ENCODE measurements at regions of chr9 and their contacts with region 1.

Region 1: DNA sequence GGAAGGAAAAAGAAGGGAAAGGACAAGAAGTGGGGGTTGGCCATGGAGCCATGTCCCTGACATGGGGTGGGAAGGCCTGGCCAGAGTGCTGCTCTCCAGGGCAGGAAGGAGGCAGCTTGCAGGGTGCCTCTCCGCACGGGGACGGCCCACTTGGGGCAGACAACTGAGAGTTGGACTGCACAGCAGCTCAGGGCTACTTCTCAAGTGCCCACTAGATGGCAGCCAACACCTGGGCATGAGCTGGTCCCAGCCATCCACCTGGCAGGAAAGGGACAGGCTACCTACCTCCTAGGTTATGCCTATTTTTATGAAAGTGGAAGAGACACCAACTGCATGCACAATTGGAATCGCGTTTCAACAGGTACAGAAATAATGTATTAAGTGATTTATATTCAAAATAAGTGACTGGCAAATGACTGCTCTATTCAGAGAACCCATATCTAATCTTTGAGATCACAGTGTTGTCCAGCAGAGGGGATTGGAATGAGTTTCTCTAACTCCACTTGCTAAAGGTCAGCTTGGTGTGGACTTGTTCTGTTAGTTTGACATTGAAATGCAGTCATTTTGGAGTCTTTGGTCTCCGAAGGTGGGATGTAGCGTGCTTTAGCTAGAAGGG is 113.4 kb downstream of the SYK start:
- DNase-seq: peak; percentile 62 to 64
- H3K4me3 ChIP-seq: no peak overlapping the region
- H3K4me3 Mint-ChIP-seq: no peak overlapping the region
- H3K27ac Mint-ChIP-seq: no peak overlapping the region
- H3K4me1 ChIP-seq: no peaks in the 10 kb centered on the region; the same call in 1 of the 2 replicates
- H3K4me1 Mint-ChIP-seq: no peaks in the 10 kb centered on the region
- H3K27me3 ChIP-seq: no peaks in the 10 kb centered on the region
- H3K27me3 Mint-ChIP-seq: no peaks in the 10 kb centered on the region
- CTCF ChIP-seq: peak; percentile 68

Region 2: DNA sequence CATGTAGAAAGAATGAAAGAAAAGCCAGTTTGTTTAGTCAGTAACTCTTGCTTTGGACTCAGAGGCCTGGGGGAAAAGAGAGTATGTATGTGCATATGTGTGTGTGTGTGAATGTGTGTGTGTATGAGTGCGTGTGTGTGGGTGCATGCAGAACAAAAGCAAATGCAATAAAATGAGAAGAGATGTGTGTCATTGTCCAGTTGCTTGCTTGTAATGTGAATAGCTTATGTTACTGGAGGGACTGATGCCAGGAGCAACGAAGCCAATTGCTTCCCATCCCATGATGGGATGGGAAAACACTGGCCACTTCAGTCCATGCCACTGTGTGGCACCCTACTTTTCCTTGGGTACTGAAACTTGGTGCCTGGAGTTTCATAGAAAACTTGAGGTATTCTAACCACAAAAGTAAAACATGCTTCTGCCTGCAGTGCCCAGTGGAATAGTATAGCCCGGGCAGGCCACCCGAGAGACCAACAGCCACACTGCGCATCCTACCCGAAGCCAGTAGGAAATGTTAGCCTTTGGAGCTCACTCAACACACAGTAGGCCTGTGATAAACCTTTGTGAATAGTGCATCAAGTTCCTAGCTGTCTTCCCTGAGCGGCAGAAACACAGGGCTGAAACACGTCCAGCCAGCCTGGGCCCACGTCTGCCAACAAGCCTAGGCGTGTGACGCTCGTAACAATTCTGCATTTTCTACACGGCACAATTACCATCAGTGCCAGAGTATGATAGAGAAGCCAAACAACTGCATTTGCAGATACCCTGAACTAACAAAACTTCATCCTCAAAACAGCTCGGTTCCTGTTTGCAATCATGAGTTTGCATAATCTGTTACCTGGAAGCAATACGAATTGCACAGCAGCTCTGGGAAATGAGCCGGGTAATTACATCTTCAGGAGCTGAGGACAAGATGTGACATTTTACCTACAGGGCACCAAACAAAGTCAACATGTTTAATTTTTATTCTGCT is 84.7 kb after region 1 on chr9:
- CTCF ChIA-PET with region 1: interaction called, 4 read pairs
- POLR2A ChIA-PET with region 1: no interaction called
- intact Hi-C with region 1: loop called (anchors 10 kb)
- DNase-seq: no peak
- H3K4me3 ChIP-seq: no peak overlapping the region
- H3K4me3 Mint-ChIP-seq: no peak overlapping the region
- H3K27ac Mint-ChIP-seq: no peak overlapping the region
- H3K4me1 ChIP-seq: no peaks in the 10 kb centered on the region
- H3K4me1 Mint-ChIP-seq: no peaks in the 10 kb centered on the region
- H3K27me3 ChIP-seq: no peaks in the 10 kb centered on the region
- H3K27me3 Mint-ChIP-seq: no peaks in the 10 kb centered on the region
- CTCF ChIP-seq: no peak

Region 3: GRCh38 chr9:91036826-91037510 is 122.0 kb after region 1 on chr9:
- CTCF ChIA-PET with region 1: no interaction called
- POLR2A ChIA-PET with region 1: no interaction called
- intact Hi-C with region 1: loop called (anchors 10 kb)
- DNase-seq: peak; percentile 77 to 85
- H3K4me3 ChIP-seq: no peak overlapping the region
- H3K4me3 Mint-ChIP-seq: no peak overlapping the region
- H3K27ac Mint-ChIP-seq: peak overlapping the region; percentile 56
- H3K4me1 ChIP-seq: peaks cover 22% of the 10 kb centered on the region
- H3K4me1 Mint-ChIP-seq: peaks cover 17% of the 10 kb centered on the region
- H3K27me3 ChIP-seq: no peaks in the 10 kb centered on the region
- H3K27me3 Mint-ChIP-seq: no peaks in the 10 kb centered on the region
- CTCF ChIP-seq: peak; percentile 32 to 49

Region 4: GRCh38 chr9:91077627-91078441 is 162.9 kb after region 1 on chr9:
- CTCF ChIA-PET with region 1: no interaction called
- POLR2A ChIA-PET with region 1: no interaction called
- intact Hi-C with region 1: no loop called
- DNase-seq: no peak
- H3K4me3 ChIP-seq: no peak overlapping the region
- H3K4me3 Mint-ChIP-seq: no peak overlapping the region
- H3K27ac Mint-ChIP-seq: no peak overlapping the region
- H3K4me1 ChIP-seq: no peaks in the 10 kb centered on the region
- H3K4me1 Mint-ChIP-seq: peaks cover 8% of the 10 kb centered on the region
- H3K27me3 ChIP-seq: no peaks in the 10 kb centered on the region
- H3K27me3 Mint-ChIP-seq: no peaks in the 10 kb centered on the region
- CTCF ChIP-seq: no peak

Region 5: DNA sequence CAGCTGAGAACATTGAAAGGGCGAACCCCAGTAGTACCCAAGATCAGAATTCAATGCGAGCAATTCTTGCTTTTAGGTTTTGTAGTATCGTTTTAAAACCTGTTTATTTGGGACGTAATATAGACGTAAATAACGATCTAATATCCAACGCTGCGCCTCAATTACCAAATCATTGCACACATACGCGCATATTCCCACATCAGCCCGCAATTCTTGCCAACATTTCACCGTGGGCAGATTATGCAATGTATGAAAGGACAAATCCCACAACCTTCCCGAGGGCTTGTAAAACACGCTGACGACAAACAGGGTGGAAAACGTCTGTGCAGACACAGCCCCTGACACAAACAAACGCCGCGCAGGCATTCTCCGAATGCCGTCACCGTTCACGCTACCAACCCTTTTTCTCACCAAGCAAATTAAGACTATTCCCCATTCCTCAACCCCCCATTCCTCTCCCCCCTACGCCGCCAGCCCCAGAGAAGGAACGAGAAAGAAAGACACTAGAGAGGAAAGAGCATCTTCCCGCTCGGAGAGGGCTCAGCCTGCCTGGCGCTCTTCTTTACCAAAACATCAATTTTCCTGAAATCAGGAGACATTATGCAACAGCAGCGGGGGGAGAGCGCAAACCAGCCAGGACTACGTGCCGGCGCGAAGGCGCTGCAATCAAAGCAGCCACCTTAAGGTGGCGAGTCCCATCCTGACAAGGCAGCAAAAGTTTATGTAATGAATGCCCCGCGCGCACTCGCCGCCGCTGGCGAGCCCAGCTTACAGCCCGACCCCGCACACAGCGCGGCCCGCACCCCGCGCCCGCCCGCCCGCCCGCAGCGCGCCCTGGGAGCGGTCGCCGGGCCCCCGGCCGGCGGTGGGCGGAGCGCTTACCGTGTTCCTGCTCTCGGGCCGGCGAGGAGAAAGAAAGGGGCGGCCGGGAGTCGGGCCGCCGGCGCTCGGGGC is 508.1 kb after region 1 on chr9:
- CTCF ChIA-PET with region 1: interaction called, 13 read pairs
- POLR2A ChIA-PET with region 1: no interaction called
- intact Hi-C with region 1: no loop called
- DNase-seq: peak; percentile 53 to 58
- H3K4me3 ChIP-seq: peak overlapping the region; percentile 63
- H3K4me3 Mint-ChIP-seq: peak overlapping the region; percentile 100
- H3K27ac Mint-ChIP-seq: peak overlapping the region; percentile 96
- H3K4me1 ChIP-seq: peaks cover 11% of the 10 kb centered on the region
- H3K4me1 Mint-ChIP-seq: peaks cover 6% of the 10 kb centered on the region
- H3K27me3 ChIP-seq: no peaks in the 10 kb centered on the region
- H3K27me3 Mint-ChIP-seq: peaks cover under 1% of the 10 kb centered on the region
- CTCF ChIP-seq: no peak

Region 6: GRCh38 chr9:91676046-91676445 is 761.1 kb after region 1 on chr9:
- CTCF ChIA-PET with region 1: no interaction called
- POLR2A ChIA-PET with region 1: no interaction called
- intact Hi-C with region 1: loop called (anchors 1 kb)
- DNase-seq: peak; percentile 46
- H3K4me3 ChIP-seq: no peak overlapping the region
- H3K4me3 Mint-ChIP-seq: no peak overlapping the region
- H3K27ac Mint-ChIP-seq: no peak overlapping the region
- H3K4me1 ChIP-seq: no peaks in the 10 kb centered on the region
- H3K4me1 Mint-ChIP-seq: no peaks in the 10 kb centered on the region
- H3K27me3 ChIP-seq: no peaks in the 10 kb centered on the region
- H3K27me3 Mint-ChIP-seq: no peaks in the 10 kb centered on the region
- CTCF ChIP-seq: peak in 1 of 2 experiments; percentile 40

Region 7: GRCh38 chr9:91727316-91727861 is 812.4 kb after region 1 on chr9:
- CTCF ChIA-PET with region 1: interaction called, 3 read pairs
- POLR2A ChIA-PET with region 1: no interaction called
- intact Hi-C with region 1: loop called (anchors 1 kb)
- DNase-seq: peak; percentile 47 to 55
- H3K4me3 ChIP-seq: no peak overlapping the region
- H3K4me3 Mint-ChIP-seq: no peak overlapping the region
- H3K27ac Mint-ChIP-seq: no peak overlapping the region
- H3K4me1 ChIP-seq: no peaks in the 10 kb centered on the region
- H3K4me1 Mint-ChIP-seq: no peaks in the 10 kb centered on the region
- H3K27me3 ChIP-seq: no peaks in the 10 kb centered on the region
- H3K27me3 Mint-ChIP-seq: no peaks in the 10 kb centered on the region
- CTCF ChIP-seq: peak; percentile 17 to 53

Measured in Caco-2 (cell line).